ENCODE measurements at regions of chr19 and their contacts with region 1.

Region 1: DNA sequence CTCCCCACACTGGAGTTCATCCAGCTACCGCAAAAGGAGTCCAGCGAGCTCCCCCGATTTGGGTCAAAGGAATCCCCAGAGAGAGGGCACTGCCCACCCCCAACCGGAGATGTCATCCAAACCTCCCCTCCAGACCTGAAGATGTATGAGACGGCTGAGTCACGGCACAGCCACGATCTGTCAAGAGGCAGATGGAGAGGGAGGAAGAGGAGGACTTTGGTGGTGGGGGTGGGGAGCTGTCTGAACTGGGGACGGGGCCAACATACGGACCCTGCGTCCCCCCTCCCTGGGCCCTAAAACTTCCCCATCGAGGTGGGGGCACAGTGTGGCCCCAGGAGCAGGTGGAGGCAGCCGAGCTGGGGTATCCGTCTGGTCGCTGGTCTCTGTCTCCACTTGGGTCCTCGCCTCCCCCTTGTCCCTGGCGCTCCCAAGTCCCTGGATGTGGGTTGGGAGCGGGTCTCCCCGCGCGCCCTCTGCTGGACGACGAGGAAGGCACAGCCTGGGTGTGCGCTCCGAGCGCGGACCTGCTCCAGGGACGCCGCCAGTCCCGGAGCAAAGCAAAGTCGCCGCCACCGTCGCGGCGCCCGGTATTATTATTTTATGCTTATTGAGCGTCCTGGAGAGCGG is 3.8 kb downstream of the PDE4A start:
- DNase-seq: no peak
- ATAC-seq: peak; percentile 9
- H3K4me3 Mint-ChIP-seq: peak overlapping the region; percentile 85
- H3K27ac Mint-ChIP-seq: peak overlapping the region; percentile 72
- H3K4me1 Mint-ChIP-seq: peaks cover 87% of the 10 kb centered on the region
- H3K27me3 Mint-ChIP-seq: peaks cover 31% of the 10 kb centered on the region
- CTCF ChIP-seq: peak; percentile 42

Region 2: DNA sequence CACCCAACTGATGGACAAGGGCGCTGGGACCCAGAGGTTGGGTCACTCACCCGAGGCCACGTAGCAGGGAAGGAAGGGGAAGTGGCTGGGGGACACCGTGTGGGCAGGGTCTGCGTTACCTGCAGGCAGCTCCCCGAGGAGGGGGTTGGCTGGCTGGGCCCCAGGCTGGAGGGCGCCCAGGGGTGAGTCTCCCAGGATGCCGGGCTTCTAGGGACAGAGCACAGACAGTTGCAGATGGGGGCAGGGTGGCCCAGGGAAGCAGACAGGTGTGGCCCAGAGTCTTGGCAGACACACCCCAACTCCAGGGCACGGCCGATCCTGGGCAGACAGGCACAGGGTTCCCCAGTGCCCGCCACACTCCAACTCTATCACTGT is 102.7 kb before region 1 on chr19:
- CTCF ChIA-PET with region 1: no interaction called
- POLR2A ChIA-PET with region 1: no interaction called
- intact Hi-C with region 1: no loop called
- DNase-seq: no peak
- ATAC-seq: no peak
- H3K4me3 Mint-ChIP-seq: no peak overlapping the region
- H3K27ac Mint-ChIP-seq: no peak overlapping the region
- H3K4me1 Mint-ChIP-seq: no peaks in the 10 kb centered on the region
- H3K27me3 Mint-ChIP-seq: no peaks in the 10 kb centered on the region
- CTCF ChIP-seq: no peak

Region 3: GRCh38 chr19:10517760-10518443 is 93.8 kb after region 1 on chr19:
- CTCF ChIA-PET with region 1: no interaction called
- POLR2A ChIA-PET with region 1: interaction called, 10 read pairs
- intact Hi-C with region 1: no loop called
- DNase-seq: peak; percentile 21
- ATAC-seq: peak; percentile 34
- H3K4me3 Mint-ChIP-seq: peak overlapping the region; percentile 28
- H3K27ac Mint-ChIP-seq: no peak overlapping the region
- H3K4me1 Mint-ChIP-seq: peaks cover 33% of the 10 kb centered on the region
- H3K27me3 Mint-ChIP-seq: peaks cover 50% of the 10 kb centered on the region
- CTCF ChIP-seq: no peak

Region 4: GRCh38 chr19:10580979-10581631 is 157.0 kb after region 1 on chr19:
- CTCF ChIA-PET with region 1: no interaction called
- POLR2A ChIA-PET with region 1: interaction called, 12 read pairs
- intact Hi-C with region 1: no loop called
- DNase-seq: peak; percentile 80
- ATAC-seq: peak; percentile 100
- H3K4me3 Mint-ChIP-seq: no peak overlapping the region
- H3K27ac Mint-ChIP-seq: no peak overlapping the region
- H3K4me1 Mint-ChIP-seq: peaks cover 16% of the 10 kb centered on the region
- H3K27me3 Mint-ChIP-seq: no peaks in the 10 kb centered on the region
- CTCF ChIP-seq: peak; percentile 73

Measured in activated B cell treated with CpG ODN at 0.5 μM for 24 hours (primary cell).